Dorsolateral prefrontal cortex (tissue), 120 donors: ENCODE measurements at regions of chr10 and their contacts with region 1.

Region 1: DNA sequence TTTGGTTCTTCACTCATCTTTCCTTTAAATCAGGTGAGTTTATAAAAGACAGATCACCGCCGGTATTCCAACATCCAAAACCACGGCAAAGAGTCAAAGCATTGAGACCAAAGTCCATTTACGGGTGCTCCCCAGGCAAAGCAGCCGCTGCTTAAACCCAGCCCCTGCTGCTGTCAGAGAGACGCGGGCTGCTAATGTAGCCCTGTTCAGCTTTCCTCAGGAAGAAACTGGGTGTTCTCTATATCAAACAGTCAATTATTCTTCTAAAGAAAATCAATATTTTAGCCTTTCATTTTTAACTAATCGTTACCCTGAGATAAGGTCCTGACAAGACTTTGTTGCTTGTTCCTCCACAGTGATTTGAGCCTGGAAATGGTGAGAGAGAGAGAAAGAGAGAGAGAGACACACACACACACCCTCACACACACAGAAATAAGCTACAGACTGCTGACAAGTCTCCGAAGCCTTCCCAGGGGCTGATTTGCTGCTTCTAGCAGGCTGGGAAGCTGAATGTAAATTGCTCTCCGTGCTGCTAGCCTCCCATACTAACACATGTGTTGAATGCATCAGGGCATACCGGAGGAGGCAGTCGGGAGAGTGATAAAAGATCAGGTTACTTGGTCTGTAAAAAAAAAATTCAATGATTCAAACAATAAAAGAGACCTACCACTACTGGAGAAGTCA is 183.0 kb upstream of the ANK3 start:
- DNase-seq: peak in 9 of 10 donors; percentile 41 to 74 (median 58)
- H3K4me3 ChIP-seq: peak overlapping the region; percentile 27 to 87 (median 67)
- H3K27ac ChIP-seq: peak overlapping the region; percentile 32 to 97 (median 86)
- H3K27me3 ChIP-seq: no peaks in the 10 kb centered on the region
- CTCF ChIP-seq: peak in 2 of 56 donors; percentile 7 to 11

Region 2: GRCh38 chr10:60023155-60023877 is 549.3 kb before region 1 on chr10:
- intact Hi-C with region 1: no loop called
- DNase-seq: no peak
- H3K4me3 ChIP-seq: no peak overlapping the region
- H3K27ac ChIP-seq: peak overlapping the region in 10 of 59 donors; percentile 1 to 33 (median 16)
- H3K27me3 ChIP-seq: no peaks in the 10 kb centered on the region
- CTCF ChIP-seq: no peak

Region 3: GRCh38 chr10:60444494-60445064 is 128.1 kb before region 1 on chr10:
- intact Hi-C with region 1: loop called in 1 of 2 experiments (anchors 5 kb)
- DNase-seq: no peak
- H3K4me3 ChIP-seq: no peak overlapping the region
- H3K27ac ChIP-seq: peak overlapping the region in 29 of 59 donors; percentile 1 to 85 (median 68)
- H3K27me3 ChIP-seq: no peaks in the 10 kb centered on the region
- CTCF ChIP-seq: peak; percentile 45 to 98 (median 76)